Activated CD8-positive, alpha-beta T cell treated with anti-CD3 and anti-CD28 coated beads, Interleukin-2, amount 10 ng/mL, durations not matched to agents 7 days and 5 days (primary cell): ENCODE measurements at regions of chr3 and their contacts with region 1.

Region 1: DNA sequence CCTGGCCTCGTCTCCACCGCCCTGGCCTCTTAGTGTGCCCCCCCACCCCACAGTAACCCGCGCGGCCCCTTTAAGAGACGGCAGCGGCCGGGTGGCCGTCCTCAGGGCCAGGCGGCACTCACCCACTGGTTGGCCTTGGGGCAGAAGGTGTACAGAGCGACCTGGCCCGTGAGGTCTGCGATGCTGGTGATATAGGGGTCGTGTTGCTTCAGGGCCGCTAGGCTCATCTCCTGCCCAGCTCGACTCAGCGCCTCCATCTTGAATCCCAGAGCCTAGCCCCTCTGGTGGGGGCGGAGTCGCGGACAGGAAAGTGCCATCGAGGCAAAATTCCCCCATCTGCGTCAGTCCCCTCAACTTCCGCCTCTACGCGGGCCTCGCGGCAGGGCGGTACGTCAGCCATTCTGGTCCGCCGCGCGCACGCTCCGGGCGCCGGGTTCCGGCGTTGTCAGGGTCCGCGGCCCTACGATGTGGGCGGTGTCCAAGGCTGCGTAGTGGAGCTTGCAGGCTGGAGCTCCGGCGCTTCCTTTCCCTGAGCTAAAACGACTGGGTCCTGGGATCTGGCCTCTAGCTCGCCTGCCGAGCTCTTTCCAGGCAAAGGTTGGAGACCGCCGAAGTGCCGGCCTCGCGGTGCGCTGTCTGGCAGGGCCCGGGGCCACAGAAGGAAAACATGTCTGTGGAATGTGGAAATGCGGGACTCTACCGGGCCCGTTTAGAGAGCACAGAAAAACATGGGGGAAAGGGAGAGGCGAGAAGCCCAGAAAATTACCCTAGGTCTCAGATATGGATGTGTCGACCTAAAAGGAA is at the start of gene DCP1A:
- DNase-seq: peak; percentile 97
- ATAC-seq: peak; percentile 97
- H3K4me3 Mint-ChIP-seq: peak within 1 kb of the TSS; percentile 98
- H3K27ac Mint-ChIP-seq: peak within 1 kb of the TSS; percentile 99
- H3K4me1 Mint-ChIP-seq: peaks cover 33% of the 10 kb centered on the region
- H3K27me3 Mint-ChIP-seq: no peaks in the 10 kb centered on the region
- total RNA-seq, gene DCP1A: 27.2 to 28.3 TPM

Region 2: DNA sequence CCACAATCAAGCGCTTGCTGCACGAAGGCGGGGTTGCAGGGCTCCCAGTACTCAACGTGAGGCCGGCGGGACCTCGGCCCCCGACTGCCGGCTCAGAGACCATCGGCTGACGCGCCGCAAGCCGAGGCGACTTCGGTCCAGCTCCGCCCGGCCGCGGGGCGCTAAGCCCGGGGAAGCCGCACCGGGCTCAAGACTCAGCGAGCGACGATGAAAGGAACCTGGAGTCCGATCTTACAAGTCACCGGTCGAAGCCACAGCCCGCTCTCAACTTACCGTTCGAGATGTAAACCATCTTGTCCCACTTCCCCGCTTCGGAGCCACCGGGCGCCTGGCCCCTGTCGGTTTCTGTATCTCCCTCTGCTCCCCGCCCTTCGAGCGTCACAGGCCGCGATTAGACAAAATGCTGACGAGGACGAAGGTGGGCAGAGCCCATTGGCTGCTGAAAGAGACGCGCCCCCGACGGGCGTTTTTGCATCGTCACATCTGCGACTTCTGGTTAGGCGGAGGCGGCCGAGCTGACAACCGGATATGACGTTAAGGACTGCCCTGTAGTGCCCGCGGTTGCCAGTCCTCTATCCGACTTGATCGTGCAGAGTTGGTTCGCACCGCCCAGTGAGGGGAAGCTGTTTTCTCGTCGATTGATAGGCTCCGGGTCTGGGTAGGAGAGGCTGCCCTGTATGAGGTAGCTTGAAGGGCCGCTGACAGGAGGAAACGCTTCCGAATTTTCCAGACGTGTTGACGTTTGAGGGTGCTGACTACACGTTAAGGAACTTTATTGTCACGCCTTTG is 544.2 kb after region 1 on chr3 and contains the start of gene SELENOK:
- CTCF ChIA-PET with region 1: no interaction called
- POLR2A ChIA-PET with region 1: interaction called, 13 read pairs
- DNase-seq: peak; percentile 99
- ATAC-seq: peak; percentile 96
- H3K4me3 Mint-ChIP-seq: peak within 1 kb of the TSS; percentile 90
- H3K27ac Mint-ChIP-seq: peak within 1 kb of the TSS; percentile 98
- H3K4me1 Mint-ChIP-seq: peaks cover 51% of the 10 kb centered on the region
- H3K27me3 Mint-ChIP-seq: peaks cover 14% of the 10 kb centered on the region
- total RNA-seq, gene SELENOK: 46.3 to 48.5 TPM

Region 3: DNA sequence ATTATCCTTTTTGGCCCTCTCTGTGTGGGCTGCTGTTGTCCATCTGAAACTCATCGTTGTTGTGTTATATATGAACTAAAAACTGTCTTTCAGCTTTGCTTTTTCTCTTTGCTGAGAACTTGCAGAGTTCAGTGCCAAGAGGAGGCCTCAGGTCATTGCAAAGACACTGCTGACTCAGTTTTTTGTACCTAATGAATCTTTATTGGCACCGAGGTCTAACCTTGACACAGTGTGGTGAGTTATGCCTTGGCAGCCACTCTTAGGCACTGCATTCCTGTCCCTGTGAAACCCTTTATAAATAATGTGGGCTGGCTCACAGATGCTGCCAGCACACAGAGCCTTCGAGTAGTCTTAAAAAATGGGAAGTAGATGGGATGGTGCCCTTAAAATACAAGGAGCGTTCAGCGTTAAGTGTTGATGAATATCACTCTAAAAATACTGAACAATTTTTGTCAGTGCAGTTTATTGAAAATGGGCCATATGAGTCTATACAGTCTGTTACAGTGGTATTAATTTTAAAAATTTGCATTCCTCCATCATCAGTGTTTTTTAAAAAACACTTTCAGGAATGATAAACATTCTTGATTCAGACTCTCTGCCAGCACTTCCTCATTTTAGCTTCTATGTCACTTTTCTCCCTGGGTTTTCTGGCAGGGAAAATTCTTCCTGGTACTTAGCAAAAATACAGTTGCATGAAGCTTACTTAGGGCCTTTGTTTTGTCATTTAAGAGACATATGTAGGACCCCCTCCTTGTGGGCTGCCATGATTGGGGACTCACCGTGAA is 1009.0 kb after region 1 on chr3:
- CTCF ChIA-PET with region 1: no interaction called
- POLR2A ChIA-PET with region 1: no interaction called
- DNase-seq: no peak
- ATAC-seq: no peak
- H3K4me3 Mint-ChIP-seq: no peak overlapping the region
- H3K27ac Mint-ChIP-seq: no peak overlapping the region
- H3K4me1 Mint-ChIP-seq: no peaks in the 10 kb centered on the region
- H3K27me3 Mint-ChIP-seq: no peaks in the 10 kb centered on the region